CD14-positive monocyte (primary cell): ENCODE measurements at regions of chr20 and their contacts with region 1.

Region 1: DNA sequence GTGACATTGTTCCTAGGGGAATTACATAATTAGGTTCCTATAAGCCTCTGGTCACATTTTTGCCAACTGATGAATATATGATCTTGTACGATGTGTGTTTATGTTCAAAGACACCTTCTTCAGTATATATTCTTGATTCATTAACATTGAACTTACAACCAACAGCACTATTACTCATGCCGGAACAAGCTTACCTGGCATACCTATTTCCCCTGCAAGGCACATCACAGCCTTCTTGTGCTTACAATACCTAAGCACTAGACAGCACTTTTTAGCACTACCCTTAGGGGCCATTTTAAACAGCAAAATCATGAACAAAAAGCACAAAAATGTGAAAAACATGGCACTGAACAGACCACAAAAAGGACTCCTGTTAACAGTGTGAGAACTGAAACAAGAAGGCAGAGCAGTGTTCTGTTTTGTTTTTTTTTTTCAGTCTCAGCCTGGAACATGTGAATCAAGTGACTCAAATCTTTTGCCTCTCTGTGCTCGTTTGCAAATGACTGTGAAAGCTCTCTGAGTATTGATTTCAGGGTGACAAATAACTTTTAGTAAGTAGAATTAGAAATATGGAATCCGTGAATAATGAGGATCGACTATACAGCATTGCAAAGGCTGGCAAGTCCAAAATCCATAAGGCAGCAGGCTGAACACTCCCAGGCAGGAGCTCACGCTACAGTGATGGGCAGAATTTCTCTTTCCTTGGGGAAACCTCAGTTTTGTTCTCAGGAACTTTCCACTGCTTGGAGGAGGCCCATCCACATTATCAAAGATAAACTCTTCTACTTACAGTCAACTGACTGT is 102.3 kb upstream of the TSHZ2 start:
- DNase-seq: no peak
- H3K4me3 ChIP-seq: no peak overlapping the region
- H3K4me3 Mint-ChIP-seq: no peak overlapping the region
- H3K27ac ChIP-seq: no peak overlapping the region
- H3K27ac Mint-ChIP-seq: peak overlapping the region in 1 of 7 donors; percentile 51
- H3K4me1 ChIP-seq: no peaks in the 10 kb centered on the region
- H3K4me1 Mint-ChIP-seq: no peaks in the 10 kb centered on the region
- H3K27me3 ChIP-seq: no peaks in the 10 kb centered on the region
- H3K27me3 Mint-ChIP-seq: peaks cover 0 to 4% (median 2%) of the 10 kb centered on the region in 3 donors
- CTCF ChIP-seq: no peak

Region 2: DNA sequence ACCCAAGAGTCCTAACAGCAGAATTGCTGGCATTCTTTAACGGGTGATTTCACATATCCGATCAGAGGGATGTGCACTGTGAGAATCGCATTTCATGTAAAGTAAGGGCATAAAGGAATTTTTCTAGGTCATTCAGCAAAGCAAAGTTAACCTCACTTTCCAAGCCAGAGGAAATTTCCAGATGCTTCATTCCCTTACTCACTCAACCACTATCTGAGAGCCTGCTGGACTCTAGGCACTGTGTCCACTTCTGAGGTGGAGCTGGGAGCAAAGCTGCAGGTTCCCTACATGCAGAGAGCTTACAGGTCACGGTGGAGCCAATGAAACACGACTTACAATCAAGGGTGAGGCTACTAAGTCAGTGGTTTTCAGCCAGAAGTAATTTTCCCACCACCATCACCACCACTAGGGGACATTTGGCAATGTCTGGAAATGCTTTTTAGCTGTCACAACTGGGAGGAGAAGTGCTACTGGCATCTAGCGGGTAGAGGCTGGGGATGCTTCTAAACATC is 67.7 kb after region 1 on chr20:
- intact Hi-C with region 1: loop called in 1 of 2 experiments (anchors 10 kb)
- DNase-seq: no peak
- H3K4me3 ChIP-seq: no peak overlapping the region
- H3K4me3 Mint-ChIP-seq: no peak overlapping the region
- H3K27ac ChIP-seq: no peak overlapping the region
- H3K27ac Mint-ChIP-seq: no peak overlapping the region
- H3K4me1 ChIP-seq: no peaks in the 10 kb centered on the region
- H3K4me1 Mint-ChIP-seq: no peaks in the 10 kb centered on the region
- H3K27me3 ChIP-seq: no peaks in the 10 kb centered on the region
- H3K27me3 Mint-ChIP-seq: no peaks in the 10 kb centered on the region
- CTCF ChIP-seq: no peak

Region 3: DNA sequence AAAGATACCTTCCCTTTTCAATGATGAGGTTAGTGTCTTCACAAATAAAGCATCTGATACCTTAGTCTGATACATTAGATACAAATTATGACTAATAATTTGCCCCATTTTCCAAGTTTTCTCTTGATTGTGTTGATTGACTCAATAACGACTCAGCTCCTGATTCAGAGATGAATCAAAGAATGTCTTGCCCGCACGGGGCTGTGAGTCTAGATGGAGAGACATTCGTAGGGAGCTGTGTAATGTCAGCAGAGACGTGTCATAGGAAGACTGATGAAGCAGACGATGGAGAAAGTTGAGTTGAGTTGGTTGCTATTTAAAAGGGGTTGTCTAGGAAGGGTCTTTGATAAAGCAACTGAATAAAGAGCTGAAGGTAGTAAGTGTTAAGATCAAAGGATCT is 180.4 kb after region 1 on chr20:
- intact Hi-C with region 1: no loop called
- DNase-seq: no peak
- H3K4me3 ChIP-seq: no peak overlapping the region
- H3K4me3 Mint-ChIP-seq: no peak overlapping the region
- H3K27ac ChIP-seq: no peak overlapping the region
- H3K27ac Mint-ChIP-seq: no peak overlapping the region
- H3K4me1 ChIP-seq: no peaks in the 10 kb centered on the region
- H3K4me1 Mint-ChIP-seq: no peaks in the 10 kb centered on the region
- H3K27me3 ChIP-seq: no peaks in the 10 kb centered on the region
- H3K27me3 Mint-ChIP-seq: peaks cover 0 to 3% (median 0%) of the 10 kb centered on the region in 3 donors
- CTCF ChIP-seq: no peak